Ovary (tissue), 10 donors: ENCODE measurements at regions of chr6 and their contacts with region 1.

Region 1: GRCh38 chr6:5471044-5471443 is 209.7 kb downstream of the FARS2 start:
- DNase-seq: no peak
- H3K4me3 ChIP-seq: no peak overlapping the region
- H3K27ac ChIP-seq: no peak overlapping the region
- H3K4me1 ChIP-seq: no peaks in the 10 kb centered on the region
- H3K27me3 ChIP-seq: no peaks in the 10 kb centered on the region
- CTCF ChIP-seq: no peak
- EP300 ChIP-seq: no peak
- POLR2A ChIP-seq: no peak

Region 2: DNA sequence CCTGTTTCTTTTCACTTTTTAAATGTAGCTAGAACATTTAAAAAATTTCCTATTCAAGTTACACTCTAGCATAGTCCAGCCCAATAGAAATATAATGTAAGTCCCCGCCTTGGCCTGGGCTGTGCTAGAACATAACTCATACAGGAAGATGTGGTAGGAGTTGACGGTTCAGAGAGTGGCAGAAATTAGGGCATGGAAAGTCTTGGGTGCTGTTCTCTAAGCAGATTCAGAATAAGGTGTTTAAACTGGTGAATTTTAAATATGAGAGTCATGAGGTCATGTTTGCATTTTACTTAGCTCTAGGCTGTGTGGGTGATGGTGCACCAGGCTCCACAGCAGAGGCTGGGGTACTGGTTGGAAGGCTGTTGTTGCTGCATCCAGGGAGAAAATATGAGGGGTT is 46.8 kb after region 1 on chr6:
- intact Hi-C with region 1: loop called in 1 of 4 experiments (anchors 1 kb)
- DNase-seq: no peak
- H3K4me3 ChIP-seq: no peak overlapping the region
- H3K27ac ChIP-seq: no peak overlapping the region
- H3K4me1 ChIP-seq: no peaks in the 10 kb centered on the region
- H3K27me3 ChIP-seq: no peaks in the 10 kb centered on the region
- CTCF ChIP-seq: no peak
- EP300 ChIP-seq: no peak
- POLR2A ChIP-seq: no peak